MCF 10A (cell line): ENCODE measurements at regions of chr12 and their contacts with region 1.

Region 1: DNA sequence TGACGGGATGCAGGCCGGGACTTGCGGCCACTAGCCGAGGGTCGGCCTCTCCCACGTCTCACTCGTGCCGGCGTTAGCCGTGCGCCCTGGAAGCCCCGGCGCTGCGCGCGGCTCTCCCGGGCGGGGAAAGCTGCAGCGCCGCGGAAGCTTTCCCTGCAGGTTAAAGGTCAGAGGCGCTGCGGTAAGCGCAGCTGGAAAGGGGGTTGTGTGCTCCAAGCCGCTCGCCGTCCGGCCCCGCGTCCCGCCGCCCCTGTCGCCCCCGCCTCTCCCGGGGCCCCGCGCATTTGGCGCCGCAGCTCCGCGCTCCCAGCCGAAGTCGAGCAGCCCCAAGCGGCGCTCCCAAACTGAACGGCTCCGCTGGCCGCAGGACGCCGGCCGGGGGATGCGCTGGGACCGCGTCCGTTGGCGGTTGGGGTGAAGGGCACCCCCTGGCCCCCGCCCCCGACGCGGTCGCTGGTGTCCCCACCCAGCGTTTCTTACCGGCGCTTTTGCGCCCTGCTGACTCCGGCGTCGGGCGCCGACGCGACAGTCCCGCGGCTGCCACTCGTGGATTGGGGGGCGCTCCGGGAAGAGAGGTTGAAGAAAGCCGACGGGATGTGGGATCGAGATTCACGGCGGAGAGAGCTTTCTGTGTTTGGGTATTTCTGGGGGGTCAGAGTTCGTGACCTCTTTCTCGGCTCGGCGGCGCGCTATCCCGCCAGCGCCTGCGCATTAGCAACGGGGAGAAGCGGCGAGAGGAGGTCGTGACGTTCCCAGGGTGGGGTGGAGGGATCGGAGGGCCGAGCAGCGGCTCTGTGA is at the start of gene NR2C1:
- DNase-seq: peak; percentile 92
- H3K4me3 Mint-ChIP-seq: peak within 1 kb of the TSS; percentile 88
- H3K27ac Mint-ChIP-seq: peak within 1 kb of the TSS; percentile 59
- H3K4me1 Mint-ChIP-seq: peaks cover 4% of the 10 kb centered on the region
- H3K27me3 Mint-ChIP-seq: no peaks in the 10 kb centered on the region
- CTCF ChIP-seq: no peak
- total RNA-seq, gene NR2C1: 29.0 and 35.2 TPM in 2 replicates

Region 2: GRCh38 chr12:94898388-94898787 is 174.7 kb before region 1 on chr12:
- CTCF ChIA-PET with region 1: no interaction called
- POLR2A ChIA-PET with region 1: no interaction called
- intact Hi-C with region 1: no loop called
- DNase-seq: peak; percentile 11
- H3K4me3 Mint-ChIP-seq: no peak overlapping the region
- H3K27ac Mint-ChIP-seq: no peak overlapping the region
- H3K4me1 Mint-ChIP-seq: peaks cover 5% of the 10 kb centered on the region
- H3K27me3 Mint-ChIP-seq: peaks cover 7% of the 10 kb centered on the region
- CTCF ChIP-seq: no peak

Region 3: DNA sequence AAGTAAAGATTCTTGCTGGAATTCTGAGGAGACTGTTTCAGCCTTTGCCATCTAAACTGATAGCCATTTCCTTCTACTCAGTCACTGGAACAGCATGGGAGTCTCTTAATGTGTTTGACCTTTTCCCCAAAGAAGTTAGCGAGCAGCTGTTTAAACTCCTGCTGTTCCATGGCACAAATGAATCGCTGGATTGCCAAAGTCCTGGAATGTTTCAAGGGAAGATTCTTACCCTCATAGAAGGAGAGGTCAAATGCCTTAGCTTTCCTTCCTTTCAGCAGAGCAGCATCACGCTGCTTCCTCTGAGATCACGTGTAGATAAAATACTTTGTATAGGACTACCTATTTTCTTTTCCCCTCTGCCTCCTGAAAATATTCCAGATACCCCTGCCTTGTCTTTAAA is 10.8 kb after region 1 on chr12:
- CTCF ChIA-PET with region 1: interaction called, 23 read pairs
- POLR2A ChIA-PET with region 1: interaction called, 30 read pairs
- intact Hi-C with region 1: no loop called
- DNase-seq: no peak
- H3K4me3 Mint-ChIP-seq: no peak overlapping the region
- H3K27ac Mint-ChIP-seq: no peak overlapping the region
- H3K4me1 Mint-ChIP-seq: peaks cover 6% of the 10 kb centered on the region
- H3K27me3 Mint-ChIP-seq: no peaks in the 10 kb centered on the region
- CTCF ChIP-seq: no peak